ENCODE measurements at regions of chr16 and their contacts with region 1.

Region 1: DNA sequence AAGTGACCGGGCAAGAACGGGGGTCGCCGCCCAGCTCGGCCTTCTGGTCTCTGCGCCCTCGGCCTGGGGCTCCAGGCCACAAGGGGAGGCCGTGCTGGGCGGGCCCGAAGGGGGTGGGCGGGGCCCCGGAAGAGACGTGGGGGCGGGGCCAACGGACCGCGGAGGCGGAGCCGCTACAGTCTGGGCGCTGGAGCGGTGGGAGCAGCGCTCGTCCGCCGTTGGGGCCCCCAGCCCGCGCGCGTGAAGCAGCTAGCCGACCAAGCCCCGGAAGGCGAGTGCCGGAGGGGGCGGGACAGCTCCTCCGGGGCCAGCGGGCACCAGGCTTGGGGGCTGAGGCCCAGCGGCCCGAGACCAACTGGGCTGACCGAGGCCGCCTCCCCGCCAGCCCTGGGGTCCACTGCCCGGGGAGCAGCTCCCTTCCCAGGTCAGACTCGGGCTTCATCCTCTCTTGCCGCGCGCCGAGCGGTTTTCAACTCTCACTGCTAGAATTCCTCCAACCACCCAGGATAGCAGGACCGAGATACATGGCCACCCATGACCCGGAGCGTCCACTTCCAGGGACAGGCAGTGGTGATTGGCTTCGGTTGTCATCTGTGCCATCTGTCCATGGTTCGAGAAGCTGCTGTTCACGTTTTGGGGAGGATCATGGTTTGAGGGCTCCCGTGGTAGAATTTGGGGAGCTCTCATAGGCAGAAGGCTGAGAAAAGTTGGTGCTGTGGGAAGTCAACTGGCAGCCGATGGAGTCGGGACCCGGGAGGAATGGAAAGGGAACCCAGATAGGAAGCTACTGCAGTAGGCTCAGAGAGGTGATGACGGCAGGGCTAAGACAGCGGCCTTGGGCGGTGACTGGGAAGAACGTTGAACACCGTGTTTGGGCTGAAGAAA is 44.6 kb upstream of the LCMT1 start:
- DNase-seq: peak; percentile 92
- H3K4me3 Mint-ChIP-seq: peak overlapping the region; percentile 83
- H3K27ac Mint-ChIP-seq: peak overlapping the region; percentile 77
- H3K4me1 Mint-ChIP-seq: peaks cover 27% of the 10 kb centered on the region
- H3K27me3 Mint-ChIP-seq: no peaks in the 10 kb centered on the region

Region 2: GRCh38 chr16:25031441-25032307 is 35.3 kb before region 1 on chr16:
- CTCF ChIA-PET with region 1: no interaction called
- POLR2A ChIA-PET with region 1: interaction called, 4 read pairs
- intact Hi-C with region 1: loop called (anchors 1 kb)
- DNase-seq: peak; percentile 94
- H3K4me3 Mint-ChIP-seq: peak overlapping the region; percentile 92
- H3K27ac Mint-ChIP-seq: peak overlapping the region; percentile 91
- H3K4me1 Mint-ChIP-seq: peaks cover 34% of the 10 kb centered on the region
- H3K27me3 Mint-ChIP-seq: no peaks in the 10 kb centered on the region

Region 3: DNA sequence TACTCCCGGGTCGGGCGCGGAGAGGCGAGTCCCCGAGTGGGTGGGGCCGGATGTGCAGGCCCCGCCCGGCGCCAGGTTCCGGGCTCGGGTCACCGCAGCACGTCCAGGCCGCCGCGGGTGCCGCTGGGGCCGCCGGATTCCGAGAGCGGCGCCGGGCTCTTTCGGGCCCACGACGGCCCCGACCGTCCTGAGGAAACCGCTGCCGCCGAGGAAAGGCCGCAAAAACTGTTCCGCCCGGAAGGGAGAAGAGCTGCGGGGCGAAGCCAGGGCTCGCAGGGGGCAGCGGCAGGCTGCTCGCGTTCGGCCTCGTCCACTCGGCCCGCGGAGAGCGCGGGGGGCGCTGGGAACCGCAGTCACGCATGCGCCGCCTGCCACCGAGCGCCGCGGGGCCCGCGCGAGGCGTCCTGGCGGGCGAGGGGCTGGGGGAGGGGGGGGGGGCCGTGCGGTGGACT is 190.5 kb after region 1 on chr16 and contains the start of gene ZKSCAN2:
- CTCF ChIA-PET with region 1: no interaction called
- POLR2A ChIA-PET with region 1: no interaction called
- intact Hi-C with region 1: loop called (anchors 10 kb)
- DNase-seq: peak; percentile 91
- H3K4me3 Mint-ChIP-seq: peak within 1 kb of the TSS; percentile 95
- H3K27ac Mint-ChIP-seq: peak within 1 kb of the TSS; percentile 91
- H3K4me1 Mint-ChIP-seq: peaks cover 54% of the 10 kb centered on the region
- H3K27me3 Mint-ChIP-seq: no peaks in the 10 kb centered on the region
- total RNA-seq, gene ZKSCAN2: 4.6 to 5.1 TPM